ENCODE measurements at regions of chr10 and their contacts with region 1.

Region 1: DNA sequence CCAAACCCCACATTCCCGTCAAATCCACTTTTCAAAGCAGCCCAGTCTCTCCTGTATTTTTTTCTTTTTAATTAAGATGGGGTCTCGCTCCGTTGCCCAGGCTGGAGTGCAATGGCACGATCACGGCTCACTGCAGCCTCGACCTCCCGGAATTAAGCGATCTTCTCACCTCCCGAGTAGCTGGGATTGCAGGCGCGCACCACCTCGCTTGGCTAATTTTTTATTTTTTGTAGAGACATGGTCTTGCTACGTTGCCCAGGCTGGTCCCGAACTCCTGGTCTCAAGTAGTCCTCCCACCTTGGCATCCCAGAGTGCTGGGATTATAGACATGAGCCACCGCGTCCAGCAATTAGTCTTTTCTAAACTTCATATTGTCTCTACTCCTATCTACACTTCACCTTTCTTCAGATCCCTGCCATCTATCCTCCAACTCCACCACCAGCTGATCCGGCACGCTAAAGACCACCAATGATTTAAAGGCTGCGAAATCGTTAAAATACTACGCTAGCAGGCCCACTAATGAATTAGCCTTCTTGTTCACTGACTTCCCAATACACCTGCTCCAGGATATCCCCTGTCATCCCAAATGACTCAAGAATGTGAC is 525 bp upstream of the CHUK start:
- DNase-seq: no peak
- H3K4me3 ChIP-seq: peak overlapping the region; percentile 89 to 97 (median 94)
- H3K27ac ChIP-seq: peak overlapping the region; percentile 80 to 88 (median 83)
- H3K4me1 ChIP-seq: peaks cover 0 to 16% (median 13%) of the 10 kb centered on the region in 4 donors
- H3K27me3 ChIP-seq: no peaks in the 10 kb centered on the region
- CTCF ChIP-seq: no peak
- EP300 ChIP-seq: no peak
- POLR2A ChIP-seq: no peak

Region 2: GRCh38 chr10:100174699-100175677 is 54.9 kb before region 1 on chr10:
- intact Hi-C with region 1: no loop called
- DNase-seq: no peak
- H3K4me3 ChIP-seq: no peak overlapping the region
- H3K27ac ChIP-seq: no peak overlapping the region
- H3K4me1 ChIP-seq: no peaks in the 10 kb centered on the region
- H3K27me3 ChIP-seq: no peaks in the 10 kb centered on the region
- CTCF ChIP-seq: no peak
- EP300 ChIP-seq: no peak
- POLR2A ChIP-seq: no peak

Region 3: DNA sequence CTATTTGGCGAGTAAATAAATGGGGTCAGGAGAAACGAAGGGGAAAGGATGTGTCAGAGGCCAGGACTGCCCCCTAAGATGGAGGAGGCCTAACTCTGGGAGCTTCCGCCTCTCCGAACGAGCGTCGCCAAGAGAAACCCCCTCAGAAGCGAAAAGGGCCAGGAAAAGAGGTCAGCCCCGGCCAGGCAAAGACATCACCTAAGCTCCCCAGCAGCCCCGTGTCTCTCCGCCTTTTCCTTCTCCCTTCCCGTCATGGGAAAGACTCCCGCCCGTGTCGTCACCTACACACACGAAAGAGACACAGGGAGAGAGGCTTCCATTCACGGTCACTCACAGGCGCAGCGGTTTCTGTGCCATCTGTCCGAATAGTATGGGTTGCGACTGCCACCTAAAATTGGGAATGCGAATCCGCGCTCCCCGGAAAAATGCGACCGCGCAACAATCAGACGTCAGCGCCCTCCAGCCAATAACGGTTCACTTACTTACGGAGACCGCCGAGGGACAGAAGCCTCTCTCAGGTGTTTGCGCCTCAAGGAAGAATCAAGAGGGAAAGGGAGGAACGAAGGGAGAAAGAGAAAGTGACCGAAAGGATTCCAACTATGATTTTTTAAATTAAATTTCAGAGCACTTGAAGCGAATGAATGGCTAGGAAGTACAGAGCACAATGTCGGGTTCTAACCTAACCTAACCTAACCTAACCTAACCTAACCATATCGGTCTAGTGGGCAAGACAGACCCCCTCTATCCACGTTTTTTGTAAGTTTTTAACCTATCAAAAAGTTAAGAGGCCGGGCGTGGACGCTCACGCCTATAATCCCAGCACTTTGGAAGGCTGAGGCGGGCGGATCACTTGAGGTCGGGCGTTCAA is 37.5 kb after region 1 on chr10 and contains the start of gene CWF19L1:
- intact Hi-C with region 1: loop called (anchors 5 kb)
- DNase-seq: peak; percentile 94
- H3K4me3 ChIP-seq: peak within 1 kb of the TSS; percentile 51 to 98 (median 83)
- H3K27ac ChIP-seq: peak within 1 kb of the TSS; percentile 76 to 90 (median 84)
- H3K4me1 ChIP-seq: peaks cover 0 to 20% (median 19%) of the 10 kb centered on the region in 4 donors
- H3K27me3 ChIP-seq: no peaks in the 10 kb centered on the region
- CTCF ChIP-seq: no peak
- EP300 ChIP-seq: peak in 1 of 4 donors; percentile 33
- POLR2A ChIP-seq: peak in 1 of 2 donors; percentile 56
- total RNA-seq, gene CWF19L1: 13.8 to 17.1 (median 16.1) TPM

Region 4: DNA sequence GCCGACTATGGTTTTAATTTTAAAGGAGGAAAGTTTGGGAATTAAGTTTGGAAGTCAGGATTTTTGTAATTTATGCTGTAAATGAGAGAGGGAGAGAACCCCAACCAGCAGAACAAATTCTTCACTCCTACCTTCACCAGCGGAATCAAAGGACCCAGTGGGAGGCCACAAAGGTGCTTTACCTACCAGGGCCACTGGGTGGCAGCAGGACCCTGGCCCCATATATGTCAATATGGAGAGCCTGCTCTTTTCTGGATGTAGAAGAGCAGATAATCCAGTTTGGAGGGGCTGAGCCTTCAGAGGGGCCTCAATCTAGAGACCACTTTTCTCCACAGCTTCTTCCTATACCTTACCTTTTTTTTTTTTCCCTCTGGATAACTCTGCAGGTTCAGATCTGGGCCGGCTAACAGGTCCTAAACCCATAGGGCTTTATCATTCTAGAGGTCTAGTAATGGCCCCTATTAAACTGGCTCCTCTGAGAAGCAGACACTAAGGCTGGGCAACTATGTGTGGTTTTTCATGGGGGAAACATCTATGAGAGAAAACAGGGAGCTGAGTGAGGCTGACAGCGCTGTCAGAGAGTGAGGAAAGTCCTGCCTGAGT is 108.6 kb after region 1 on chr10:
- intact Hi-C with region 1: no loop called
- DNase-seq: peak; percentile 85
- H3K4me3 ChIP-seq: no peak overlapping the region
- H3K27ac ChIP-seq: no peak overlapping the region
- H3K4me1 ChIP-seq: no peaks in the 10 kb centered on the region
- H3K27me3 ChIP-seq: peaks cover 0 to 6% (median 0%) of the 10 kb centered on the region in 3 donors
- CTCF ChIP-seq: peak; percentile 75 to 92 (median 88)
- EP300 ChIP-seq: no peak
- POLR2A ChIP-seq: no peak